ENCODE measurements at regions of chr11 and their contacts with region 1.

Region 1: GRCh38 chr11:1572197-1573076 is at the start of gene DUSP8:
- DNase-seq: peak; percentile 93 to 98 (median 96)
- H3K4me3 ChIP-seq: peak within 1 kb of the TSS; percentile 64
- H3K4me3 Mint-ChIP-seq: peak within 1 kb of the TSS; percentile 78 to 94 (median 84)
- H3K27ac ChIP-seq: peak within 1 kb of the TSS; percentile 76
- H3K27ac Mint-ChIP-seq: peak within 1 kb of the TSS; percentile 87 to 99 (median 94)
- H3K4me1 ChIP-seq: peaks cover 35% of the 10 kb centered on the region
- H3K4me1 Mint-ChIP-seq: peaks cover 19 to 45% (median 22%) of the 10 kb centered on the region in 3 donors
- H3K27me3 ChIP-seq: peaks cover 4% of the 10 kb centered on the region
- H3K27me3 Mint-ChIP-seq: no peaks in the 10 kb centered on the region
- total RNA-seq, gene DUSP8: 2.3 to 4.0 TPM

Region 2: GRCh38 chr11:1113405-1114201 is 458.8 kb before region 1 on chr11:
- CTCF ChIA-PET with region 1: no interaction called
- POLR2A ChIA-PET with region 1: no interaction called
- DNase-seq: peak in 1 of 5 donors; percentile 42
- H3K4me3 ChIP-seq: no peak overlapping the region
- H3K4me3 Mint-ChIP-seq: no peak overlapping the region
- H3K27ac ChIP-seq: no peak overlapping the region
- H3K27ac Mint-ChIP-seq: no peak overlapping the region
- H3K4me1 ChIP-seq: no peaks in the 10 kb centered on the region
- H3K4me1 Mint-ChIP-seq: no peaks in the 10 kb centered on the region
- H3K27me3 ChIP-seq: no peaks in the 10 kb centered on the region
- H3K27me3 Mint-ChIP-seq: peaks cover 0 to 3% of the 10 kb centered on the region in 2 donors

Region 3: DNA sequence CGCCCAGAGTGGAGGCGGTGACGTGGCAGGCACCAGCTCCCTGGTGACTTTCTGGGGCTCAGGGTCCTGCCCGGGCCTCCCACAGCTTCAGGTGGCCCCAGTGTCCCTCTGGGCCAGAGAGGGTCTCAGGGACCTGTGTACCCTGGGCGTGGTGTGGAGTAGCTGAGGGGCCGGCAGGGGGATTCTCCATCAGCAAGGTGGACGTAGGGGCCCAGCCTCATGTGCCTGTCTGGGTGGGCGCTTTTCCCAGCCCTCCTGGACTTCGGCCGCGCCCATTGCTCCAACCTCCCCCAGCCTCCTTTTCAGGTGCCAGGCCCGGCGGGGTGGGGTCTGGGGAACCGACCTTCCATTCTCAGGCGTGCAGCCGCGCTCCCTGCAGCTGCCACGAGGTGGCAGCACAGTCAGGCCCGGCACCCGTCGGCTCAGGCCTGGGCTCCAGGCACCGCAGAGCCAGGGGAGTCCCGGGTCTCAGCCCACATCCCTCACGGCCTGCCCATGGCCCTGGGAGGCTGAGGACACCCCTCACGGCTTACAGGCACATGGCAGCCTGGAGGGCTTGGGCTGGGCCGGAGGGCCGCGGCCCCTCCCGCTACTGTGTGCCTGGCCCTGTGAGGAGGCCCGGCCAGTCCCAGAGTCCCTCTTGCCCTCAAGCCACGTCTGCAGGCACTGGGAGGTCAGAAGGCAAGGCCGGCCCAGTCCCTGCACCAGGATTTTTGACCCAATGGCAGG is 369.5 kb before region 1 on chr11:
- CTCF ChIA-PET with region 1: interaction called, 22 read pairs
- POLR2A ChIA-PET with region 1: no interaction called
- DNase-seq: peak; percentile 37 to 68 (median 42)
- H3K4me3 ChIP-seq: no peak overlapping the region
- H3K4me3 Mint-ChIP-seq: no peak overlapping the region
- H3K27ac ChIP-seq: no peak overlapping the region
- H3K27ac Mint-ChIP-seq: no peak overlapping the region
- H3K4me1 ChIP-seq: no peaks in the 10 kb centered on the region
- H3K4me1 Mint-ChIP-seq: no peaks in the 10 kb centered on the region
- H3K27me3 ChIP-seq: no peaks in the 10 kb centered on the region
- H3K27me3 Mint-ChIP-seq: no peaks in the 10 kb centered on the region

Region 4: GRCh38 chr11:1536065-1536843 is 36.2 kb before region 1 on chr11:
- CTCF ChIA-PET with region 1: interaction called, 18 read pairs
- POLR2A ChIA-PET with region 1: no interaction called
- DNase-seq: no peak
- H3K4me3 ChIP-seq: no peak overlapping the region
- H3K4me3 Mint-ChIP-seq: peak overlapping the region in 4 of 7 donors; percentile 10 to 71 (median 50)
- H3K27ac ChIP-seq: no peak overlapping the region
- H3K27ac Mint-ChIP-seq: no peak overlapping the region
- H3K4me1 ChIP-seq: peaks cover 35% of the 10 kb centered on the region
- H3K4me1 Mint-ChIP-seq: peaks cover 37 to 57% (median 42%) of the 10 kb centered on the region in 3 donors
- H3K27me3 ChIP-seq: no peaks in the 10 kb centered on the region
- H3K27me3 Mint-ChIP-seq: peaks cover 3 to 5% of the 10 kb centered on the region in 2 donors

Region 5: GRCh38 chr11:1546536-1547400 is 25.7 kb before region 1 on chr11:
- CTCF ChIA-PET with region 1: interaction called, 152 read pairs
- POLR2A ChIA-PET with region 1: interaction called, 3 read pairs
- DNase-seq: peak; percentile 31 to 70 (median 47)
- H3K4me3 ChIP-seq: no peak overlapping the region
- H3K4me3 Mint-ChIP-seq: no peak overlapping the region
- H3K27ac ChIP-seq: no peak overlapping the region
- H3K27ac Mint-ChIP-seq: no peak overlapping the region
- H3K4me1 ChIP-seq: peaks cover 14% of the 10 kb centered on the region
- H3K4me1 Mint-ChIP-seq: peaks cover 0 to 11% (median 2%) of the 10 kb centered on the region in 3 donors
- H3K27me3 ChIP-seq: peaks cover 24% of the 10 kb centered on the region
- H3K27me3 Mint-ChIP-seq: peaks cover 19 to 37% of the 10 kb centered on the region in 2 donors

Region 6: DNA sequence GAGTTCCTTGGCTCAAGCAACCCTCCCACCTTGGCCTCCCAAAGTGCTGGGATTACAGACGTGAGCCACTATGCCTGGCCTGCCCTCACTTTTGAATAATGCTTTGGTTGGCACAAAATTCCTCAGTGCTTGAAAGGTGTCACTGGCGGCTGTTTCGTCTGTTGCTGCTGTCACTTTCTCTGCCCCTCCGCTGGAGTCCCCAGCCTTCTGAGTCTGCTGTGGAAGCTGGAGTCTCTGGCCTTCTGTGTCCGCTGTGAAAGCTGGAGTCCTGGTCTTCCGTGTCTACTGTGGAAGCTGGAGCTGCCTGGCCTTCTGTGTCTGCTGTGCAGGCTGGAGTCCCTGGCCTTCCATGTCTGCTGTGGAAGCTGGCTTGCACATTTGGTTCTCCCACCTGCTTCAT is 17.6 kb after region 1 on chr11:
- CTCF ChIA-PET with region 1: interaction called, 15 read pairs
- POLR2A ChIA-PET with region 1: interaction called, 7 read pairs
- DNase-seq: no peak
- H3K4me3 ChIP-seq: no peak overlapping the region
- H3K4me3 Mint-ChIP-seq: peak overlapping the region in 4 of 7 donors; percentile 5 to 57 (median 34)
- H3K27ac ChIP-seq: no peak overlapping the region
- H3K27ac Mint-ChIP-seq: peak overlapping the region in 5 of 8 donors; percentile 46 to 74 (median 64)
- H3K4me1 ChIP-seq: peaks cover 28% of the 10 kb centered on the region
- H3K4me1 Mint-ChIP-seq: peaks cover 22 to 34% (median 26%) of the 10 kb centered on the region in 3 donors
- H3K27me3 ChIP-seq: no peaks in the 10 kb centered on the region
- H3K27me3 Mint-ChIP-seq: peaks cover 7 to 13% of the 10 kb centered on the region in 2 donors

Region 7: DNA sequence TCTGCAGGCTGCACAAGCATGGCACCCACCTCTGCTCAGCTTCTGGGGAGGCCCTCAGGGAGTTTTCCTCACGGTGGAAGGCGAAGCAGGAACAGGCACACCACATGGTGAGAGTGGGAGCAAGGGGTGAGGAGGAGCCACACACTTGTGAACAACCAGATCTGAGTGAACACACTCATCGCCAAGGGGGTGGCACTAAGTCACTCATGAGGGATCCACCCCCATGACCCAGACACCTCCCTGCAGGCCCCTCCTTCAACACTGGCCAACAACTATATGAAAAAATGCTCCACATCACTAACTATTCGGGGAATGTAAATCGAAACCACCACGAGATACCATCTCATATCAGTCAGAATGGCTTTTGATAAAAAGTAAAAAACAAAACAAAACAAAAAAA is 26.4 kb after region 1 on chr11:
- CTCF ChIA-PET with region 1: interaction called, 15 read pairs
- POLR2A ChIA-PET with region 1: interaction called, 5 read pairs
- DNase-seq: peak in 1 of 5 donors; percentile 3
- H3K4me3 ChIP-seq: no peak overlapping the region
- H3K4me3 Mint-ChIP-seq: no peak overlapping the region
- H3K27ac ChIP-seq: no peak overlapping the region
- H3K27ac Mint-ChIP-seq: peak overlapping the region in 1 of 8 donors; percentile 74
- H3K4me1 ChIP-seq: peaks cover 4% of the 10 kb centered on the region
- H3K4me1 Mint-ChIP-seq: peaks cover 8 to 10% (median 9%) of the 10 kb centered on the region in 3 donors
- H3K27me3 ChIP-seq: no peaks in the 10 kb centered on the region
- H3K27me3 Mint-ChIP-seq: peaks cover 25 to 75% of the 10 kb centered on the region in 2 donors

Measured in CD8-positive, alpha-beta memory T cell (primary cell).